ENCODE measurements at regions of chr14 and their contacts with region 1.

Region 1: DNA sequence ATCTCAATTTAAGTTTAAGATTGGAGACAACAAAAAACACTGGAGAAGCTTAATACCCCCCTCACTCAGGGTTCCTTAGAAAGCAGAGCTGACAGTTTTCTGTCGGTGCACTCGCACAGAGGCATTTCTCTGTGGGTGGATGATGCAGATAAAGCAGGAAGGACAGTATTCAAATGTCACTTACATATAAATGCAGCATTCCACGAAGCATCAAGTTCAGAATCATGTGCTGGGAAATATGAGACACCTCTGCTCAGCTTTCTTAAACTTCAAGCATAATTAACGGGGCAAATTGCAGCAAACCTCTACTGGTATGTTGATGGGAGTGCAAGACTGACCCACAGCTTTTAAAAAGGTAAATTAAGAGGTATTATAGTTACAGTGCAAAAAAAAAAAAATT is 68.7 kb downstream of the DICER1 start:
- DNase-seq: no peak
- H3K4me3 Mint-ChIP-seq: no peak overlapping the region
- H3K27ac Mint-ChIP-seq: no peak overlapping the region
- H3K4me1 Mint-ChIP-seq: no peaks in the 10 kb centered on the region
- H3K27me3 Mint-ChIP-seq: no peaks in the 10 kb centered on the region

Region 2: GRCh38 chr14:94601884-94602391 is 486.7 kb before region 1 on chr14:
- CTCF ChIA-PET with region 1: no interaction called
- intact Hi-C with region 1: no loop called
- DNase-seq: no peak
- H3K4me3 Mint-ChIP-seq: no peak overlapping the region
- H3K27ac Mint-ChIP-seq: no peak overlapping the region
- H3K4me1 Mint-ChIP-seq: no peaks in the 10 kb centered on the region
- H3K27me3 Mint-ChIP-seq: peaks cover 5% of the 10 kb centered on the region

Region 3: DNA sequence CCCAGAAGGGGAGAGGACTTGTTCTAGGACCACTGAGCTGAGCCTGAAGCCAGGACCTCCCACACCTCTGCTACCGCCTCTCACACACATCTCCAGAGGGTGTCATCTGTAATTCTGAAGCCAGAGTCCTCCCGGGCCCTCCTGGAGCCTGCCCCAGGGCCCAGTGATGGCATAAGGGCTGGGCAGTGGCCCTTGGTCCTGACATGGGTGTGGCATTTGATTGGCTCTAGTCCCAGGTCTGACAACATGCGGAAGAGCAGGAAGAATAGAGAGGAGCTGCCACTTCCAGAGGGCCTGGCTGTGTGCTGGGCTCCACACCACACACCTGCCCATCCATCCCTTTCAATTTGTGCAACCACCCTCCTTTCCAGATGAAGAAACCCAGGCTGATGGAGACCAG is 174.5 kb before region 1 on chr14:
- CTCF ChIA-PET with region 1: no interaction called
- intact Hi-C with region 1: no loop called
- DNase-seq: no peak
- H3K4me3 Mint-ChIP-seq: no peak overlapping the region
- H3K27ac Mint-ChIP-seq: no peak overlapping the region
- H3K4me1 Mint-ChIP-seq: no peaks in the 10 kb centered on the region
- H3K27me3 Mint-ChIP-seq: peaks cover 19% of the 10 kb centered on the region

Region 4: DNA sequence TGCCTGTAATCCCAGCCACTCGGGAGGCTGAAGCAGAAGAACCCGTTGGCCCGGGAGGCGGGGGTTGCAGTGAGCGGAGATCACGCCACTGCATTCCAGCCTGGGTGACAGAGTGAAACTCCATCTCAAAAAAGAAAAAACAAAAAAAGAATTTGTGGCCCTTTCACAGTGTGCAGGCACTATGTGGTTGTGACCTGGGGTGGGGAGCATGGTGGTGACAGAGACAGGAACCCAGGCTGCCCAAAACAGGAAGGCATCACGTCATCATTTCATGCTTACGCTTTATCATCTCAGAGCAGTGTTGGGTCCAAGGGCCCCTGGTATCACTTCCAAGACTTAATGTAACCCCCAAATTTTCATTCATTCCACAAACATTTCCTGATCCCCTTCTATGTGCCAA is 143.1 kb before region 1 on chr14:
- CTCF ChIA-PET with region 1: no interaction called
- intact Hi-C with region 1: no loop called
- DNase-seq: peak; percentile 7
- H3K4me3 Mint-ChIP-seq: no peak overlapping the region
- H3K27ac Mint-ChIP-seq: peak overlapping the region; percentile 73
- H3K4me1 Mint-ChIP-seq: no peaks in the 10 kb centered on the region
- H3K27me3 Mint-ChIP-seq: no peaks in the 10 kb centered on the region

Region 5: GRCh38 chr14:95098984-95099599 is 10.4 kb after region 1 on chr14:
- CTCF ChIA-PET with region 1: no interaction called
- intact Hi-C with region 1: loop called (anchors 2 kb)
- DNase-seq: peak; percentile 63
- H3K4me3 Mint-ChIP-seq: no peak overlapping the region
- H3K27ac Mint-ChIP-seq: peak overlapping the region; percentile 5
- H3K4me1 Mint-ChIP-seq: peaks cover 19% of the 10 kb centered on the region
- H3K27me3 Mint-ChIP-seq: no peaks in the 10 kb centered on the region